ENCODE measurements at regions of chr9 and their contacts with region 1.

Region 1: GRCh38 chr9:34072868-34073590 is 24.3 kb upstream of the UBAP2 start:
- DNase-seq: no peak
- H3K4me3 Mint-ChIP-seq: no peak overlapping the region
- H3K27ac Mint-ChIP-seq: no peak overlapping the region
- H3K4me1 Mint-ChIP-seq: no peaks in the 10 kb centered on the region
- H3K27me3 Mint-ChIP-seq: no peaks in the 10 kb centered on the region

Region 2: GRCh38 chr9:33843312-33843961 is 229.6 kb before region 1 on chr9:
- CTCF ChIA-PET with region 1: no interaction called
- POLR2A ChIA-PET with region 1: no interaction called
- intact Hi-C with region 1: no loop called
- DNase-seq: no peak
- H3K4me3 Mint-ChIP-seq: no peak overlapping the region
- H3K27ac Mint-ChIP-seq: no peak overlapping the region
- H3K4me1 Mint-ChIP-seq: peaks cover 38% of the 10 kb centered on the region
- H3K27me3 Mint-ChIP-seq: no peaks in the 10 kb centered on the region

Region 3: DNA sequence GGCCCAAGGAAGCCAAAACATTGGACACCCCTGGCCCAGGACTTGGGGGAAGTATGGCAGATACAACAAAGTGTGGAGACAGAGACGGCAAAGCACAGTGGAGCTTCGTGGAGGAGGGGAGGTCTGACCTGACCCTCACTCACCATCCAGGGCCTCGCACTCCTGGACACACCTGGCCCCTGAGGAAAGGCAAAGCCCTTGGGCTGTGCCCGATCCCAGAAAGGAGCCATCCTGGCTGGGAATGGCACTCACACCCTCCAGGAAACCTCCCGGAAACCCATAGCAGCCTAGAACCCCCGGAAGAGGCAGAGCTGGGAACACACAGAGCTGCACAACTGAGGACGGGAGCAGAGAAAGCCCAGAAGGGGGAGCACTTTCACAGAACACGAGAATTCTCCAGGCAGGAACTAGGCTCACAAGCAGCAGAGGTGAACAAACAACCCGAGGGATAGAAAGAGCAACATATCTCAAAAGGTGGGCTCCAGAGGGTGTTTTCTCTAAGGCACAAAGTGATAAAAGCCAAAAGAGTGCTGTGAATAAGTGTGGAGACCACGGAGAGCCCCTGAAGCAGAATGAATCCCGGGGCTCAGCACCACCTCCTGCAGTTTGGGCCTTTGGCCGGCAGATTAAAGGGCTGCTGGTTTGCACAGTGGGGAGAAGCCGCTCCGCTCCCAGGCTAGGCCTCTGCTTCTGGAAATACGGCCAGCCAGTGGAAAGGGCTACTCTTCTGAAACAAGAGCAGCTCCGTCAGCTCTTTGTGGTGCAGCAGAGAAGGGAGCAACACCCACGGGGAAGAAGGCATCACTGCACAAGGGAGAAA is 147.8 kb before region 1 on chr9:
- CTCF ChIA-PET with region 1: interaction called, 15 read pairs
- POLR2A ChIA-PET with region 1: no interaction called
- intact Hi-C with region 1: no loop called
- DNase-seq: peak; percentile 35
- H3K4me3 Mint-ChIP-seq: no peak overlapping the region
- H3K27ac Mint-ChIP-seq: no peak overlapping the region
- H3K4me1 Mint-ChIP-seq: no peaks in the 10 kb centered on the region
- H3K27me3 Mint-ChIP-seq: no peaks in the 10 kb centered on the region

Region 4: DNA sequence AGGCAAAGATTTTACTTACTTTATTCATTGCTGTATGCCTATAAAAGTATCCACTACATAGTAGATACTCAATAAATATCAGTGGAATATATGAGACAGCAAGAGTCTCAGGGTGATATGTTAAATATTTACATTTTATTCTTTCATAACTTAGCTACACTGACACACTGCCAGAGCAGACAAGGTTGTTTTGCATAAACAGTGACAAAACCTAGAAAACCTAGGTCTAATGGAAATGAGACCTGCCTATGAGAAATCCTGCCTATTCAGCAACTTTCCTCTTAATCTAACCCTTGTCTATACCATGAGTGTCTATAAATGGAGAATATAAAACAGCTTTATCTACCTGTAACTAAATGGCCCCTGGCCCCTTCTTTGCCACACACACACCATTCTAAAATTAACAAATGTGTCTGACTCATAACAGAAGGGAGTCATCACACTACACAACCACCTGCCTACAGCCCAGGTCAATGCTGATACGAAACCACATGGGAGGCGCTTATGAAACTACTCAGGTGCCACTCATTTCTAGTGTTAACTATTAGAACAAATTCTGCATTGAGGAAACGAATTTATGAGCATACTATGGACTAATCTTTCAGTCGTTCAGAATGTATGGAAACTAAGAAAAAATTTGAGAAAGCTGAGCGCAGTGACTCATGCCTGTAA is 84.7 kb before region 1 on chr9:
- CTCF ChIA-PET with region 1: interaction called, 8 read pairs
- POLR2A ChIA-PET with region 1: no interaction called
- intact Hi-C with region 1: loop called (anchors 1 kb)
- DNase-seq: peak; percentile 63
- H3K4me3 Mint-ChIP-seq: no peak overlapping the region
- H3K27ac Mint-ChIP-seq: peak overlapping the region; percentile 28
- H3K4me1 Mint-ChIP-seq: peaks cover 16% of the 10 kb centered on the region
- H3K27me3 Mint-ChIP-seq: no peaks in the 10 kb centered on the region

Region 5: GRCh38 chr9:34010979-34011378 is 62.0 kb before region 1 on chr9:
- CTCF ChIA-PET with region 1: interaction called, 15 read pairs
- POLR2A ChIA-PET with region 1: no interaction called
- intact Hi-C with region 1: loop called (anchors 2 kb)
- DNase-seq: no peak
- H3K4me3 Mint-ChIP-seq: no peak overlapping the region
- H3K27ac Mint-ChIP-seq: no peak overlapping the region
- H3K4me1 Mint-ChIP-seq: no peaks in the 10 kb centered on the region
- H3K27me3 Mint-ChIP-seq: no peaks in the 10 kb centered on the region

Region 6: DNA sequence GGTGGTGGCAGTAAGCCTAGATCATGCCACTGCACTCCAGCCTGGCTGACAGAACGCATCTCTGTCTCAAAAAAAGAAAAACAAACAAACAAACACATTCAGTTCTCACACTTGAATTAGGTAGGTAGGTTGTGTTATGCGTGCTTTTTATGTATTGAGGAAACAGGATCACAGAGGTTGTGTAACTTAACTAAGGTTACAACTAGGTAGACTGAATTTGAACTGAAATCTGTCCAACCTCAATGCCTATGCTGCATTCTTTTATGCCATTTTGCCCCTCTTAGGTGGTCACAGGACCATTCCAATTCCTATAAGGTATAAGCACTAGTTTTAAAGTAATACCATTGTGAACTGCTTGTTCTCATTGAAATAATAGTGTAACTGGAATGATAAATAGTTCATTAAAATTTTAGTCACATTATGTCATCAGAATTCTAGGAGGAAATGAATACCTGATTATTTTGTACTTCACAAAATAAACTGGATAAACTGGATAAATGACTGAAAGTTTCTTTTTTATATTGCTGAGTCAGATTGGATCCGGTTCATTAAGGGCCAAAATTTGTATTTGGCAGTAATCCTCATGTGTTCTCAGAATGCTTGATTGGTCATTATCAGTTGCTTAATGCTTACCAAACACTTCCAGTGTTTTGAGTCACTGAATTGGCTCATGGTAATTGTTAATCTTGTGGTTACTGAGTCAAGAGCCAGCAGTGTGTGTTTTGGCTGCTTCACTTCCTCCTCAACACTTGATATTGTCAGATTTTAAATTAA is 112.9 kb after region 1 on chr9:
- CTCF ChIA-PET with region 1: no interaction called
- POLR2A ChIA-PET with region 1: no interaction called
- intact Hi-C with region 1: no loop called
- DNase-seq: peak; percentile 27
- H3K4me3 Mint-ChIP-seq: no peak overlapping the region
- H3K27ac Mint-ChIP-seq: peak overlapping the region; percentile 23
- H3K4me1 Mint-ChIP-seq: peaks cover 31% of the 10 kb centered on the region
- H3K27me3 Mint-ChIP-seq: no peaks in the 10 kb centered on the region

Measured in activated CD4-positive, alpha-beta memory T cell treated with anti-CD3 and anti-CD28 coated beads for 36 hours (primary cell).